ENCODE measurements at regions of chr15 and their contacts with region 1.

Region 1: DNA sequence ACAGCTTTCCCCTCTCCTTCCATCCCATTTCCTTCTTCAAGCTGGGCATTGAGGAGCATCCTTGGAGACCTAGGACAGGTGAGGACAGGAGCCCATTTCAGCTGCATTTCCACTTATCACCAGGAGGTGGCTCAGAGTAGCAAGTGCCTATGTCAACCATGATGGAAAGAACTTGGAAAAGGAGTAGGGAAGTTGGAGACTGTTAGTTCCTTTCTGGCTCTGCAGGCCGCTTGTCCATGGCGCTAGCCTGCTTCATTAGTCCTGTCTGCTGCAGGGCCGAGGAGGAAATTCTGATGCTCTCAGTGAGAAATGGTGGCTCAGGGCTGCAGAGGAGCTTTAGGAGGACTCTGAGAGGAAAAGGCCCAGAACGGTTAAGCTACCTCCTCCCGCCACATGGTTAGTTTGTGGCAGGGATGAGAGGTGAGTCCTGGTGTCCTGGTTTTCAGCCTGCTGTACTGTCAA is 7.0 kb upstream of the CD276 start:
- DNase-seq: peak; percentile 28 to 60 (median 43)
- H3K4me3 ChIP-seq: no peak overlapping the region
- H3K4me3 Mint-ChIP-seq: no peak overlapping the region
- H3K27ac ChIP-seq: no peak overlapping the region
- H3K27ac Mint-ChIP-seq: no peak overlapping the region
- H3K4me1 ChIP-seq: no peaks in the 10 kb centered on the region
- H3K4me1 Mint-ChIP-seq: no peaks in the 10 kb centered on the region
- H3K27me3 ChIP-seq: no peaks in the 10 kb centered on the region
- H3K27me3 Mint-ChIP-seq: peaks cover 14 to 37% of the 10 kb centered on the region in 2 donors

Region 2: DNA sequence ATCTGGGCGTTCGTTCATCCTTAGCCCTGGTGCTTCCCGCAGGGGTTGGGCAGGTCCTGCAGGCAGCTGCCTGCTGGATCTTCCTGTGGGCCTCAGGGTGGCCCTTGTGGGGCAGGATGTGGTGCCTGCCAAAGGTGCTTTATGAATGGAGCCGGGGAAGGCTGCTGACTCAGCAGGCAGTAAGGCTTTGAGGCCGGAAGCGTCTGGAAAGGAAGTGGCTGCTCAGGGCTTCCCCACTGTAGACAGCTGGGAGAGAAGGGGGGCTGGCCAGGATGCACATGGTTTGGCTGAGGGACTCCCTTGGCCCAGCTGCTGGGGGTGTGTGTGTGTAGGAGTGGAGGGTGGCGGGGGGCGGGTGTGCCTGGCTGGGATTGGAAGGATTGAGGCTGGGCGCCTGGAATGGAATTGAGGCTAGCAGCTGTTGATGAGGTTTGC is 19.9 kb after region 1 on chr15:
- CTCF ChIA-PET with region 1: interaction called, 161 read pairs
- POLR2A ChIA-PET with region 1: no interaction called
- DNase-seq: peak; percentile 60 to 87 (median 71)
- H3K4me3 ChIP-seq: no peak overlapping the region
- H3K4me3 Mint-ChIP-seq: peak overlapping the region in 6 of 7 donors; percentile 6 to 75 (median 45)
- H3K27ac ChIP-seq: no peak overlapping the region
- H3K27ac Mint-ChIP-seq: peak overlapping the region in 7 of 8 donors; percentile 33 to 89 (median 79)
- H3K4me1 ChIP-seq: peaks cover 16% of the 10 kb centered on the region
- H3K4me1 Mint-ChIP-seq: peaks cover 23 to 28% (median 24%) of the 10 kb centered on the region in 3 donors
- H3K27me3 ChIP-seq: peaks cover 27% of the 10 kb centered on the region
- H3K27me3 Mint-ChIP-seq: peaks cover 28 to 47% of the 10 kb centered on the region in 2 donors

Region 3: DNA sequence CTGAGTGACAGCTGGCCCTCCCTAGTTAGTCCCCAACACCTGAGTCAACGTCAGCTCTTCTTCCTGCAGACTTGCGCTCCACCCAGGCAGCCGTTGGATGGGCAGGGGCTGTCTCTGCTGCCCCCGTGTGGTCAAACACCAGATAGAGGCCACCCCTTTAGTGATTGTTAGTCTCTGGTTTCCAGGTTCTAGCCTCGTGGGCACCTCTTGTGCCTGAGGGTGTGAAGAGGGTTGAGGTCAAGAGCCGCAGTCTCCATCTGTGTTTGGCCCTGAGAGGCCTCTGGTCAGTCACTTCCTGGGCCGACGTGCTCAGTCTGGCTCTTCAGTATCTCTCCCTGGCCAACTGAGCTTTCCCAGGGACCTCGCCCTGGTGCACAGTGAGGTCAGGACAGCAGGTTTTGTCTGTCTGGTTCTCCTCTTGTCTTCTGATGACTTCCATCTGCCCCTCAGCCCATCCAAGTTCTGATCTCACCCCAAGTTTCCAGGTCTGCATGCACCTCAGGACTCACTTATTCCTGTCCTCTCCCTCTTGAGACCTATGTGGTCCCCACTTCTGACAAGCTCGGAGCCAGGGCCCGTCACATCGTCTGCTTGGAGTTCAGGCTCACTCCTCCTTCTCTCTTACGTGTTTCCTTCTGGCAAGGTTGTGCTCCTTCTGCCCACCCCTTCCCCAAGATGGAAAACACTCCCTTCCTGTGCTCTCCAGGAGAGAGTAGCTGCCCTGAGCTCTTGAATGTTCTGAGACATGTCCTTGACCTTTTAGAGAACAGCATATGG is 27.9 kb after region 1 on chr15:
- CTCF ChIA-PET with region 1: interaction called, 161 read pairs
- POLR2A ChIA-PET with region 1: no interaction called
- DNase-seq: peak; percentile 30 to 63 (median 35)
- H3K4me3 ChIP-seq: no peak overlapping the region
- H3K4me3 Mint-ChIP-seq: no peak overlapping the region
- H3K27ac ChIP-seq: no peak overlapping the region
- H3K27ac Mint-ChIP-seq: peak overlapping the region in 1 of 8 donors; percentile 5
- H3K4me1 ChIP-seq: no peaks in the 10 kb centered on the region
- H3K4me1 Mint-ChIP-seq: peaks cover 0 to 3% (median 2%) of the 10 kb centered on the region in 3 donors
- H3K27me3 ChIP-seq: no peaks in the 10 kb centered on the region
- H3K27me3 Mint-ChIP-seq: peaks cover 11 to 37% of the 10 kb centered on the region in 2 donors

Measured in CD8-positive, alpha-beta memory T cell (primary cell).